Activated CD4-positive, alpha-beta T cell treated with anti-CD3 and anti-CD28 coated beads for 36 hours (primary cell): ENCODE measurements at regions of chr13 and their contacts with region 1.

Region 1: DNA sequence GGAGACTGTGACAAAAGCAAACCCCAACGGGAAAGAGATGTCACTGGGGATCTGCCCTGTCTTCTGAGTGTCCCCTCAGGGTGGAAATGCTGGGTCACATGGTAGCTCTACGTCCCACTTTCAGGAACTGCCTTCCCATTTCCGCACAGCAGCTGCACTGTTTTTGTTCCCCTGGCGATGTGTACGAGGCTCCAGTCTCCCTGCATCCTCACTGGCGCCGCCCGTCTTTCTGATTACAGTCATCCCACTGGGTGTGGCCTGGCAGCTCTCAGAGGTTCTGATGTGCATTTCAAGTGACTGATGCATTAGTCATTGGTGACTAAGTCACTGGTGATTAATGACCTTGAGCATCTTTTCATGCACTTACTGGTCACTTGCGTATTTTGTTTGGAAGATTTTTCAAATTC is 21.2 kb downstream of the PCID2 start:
- DNase-seq: peak; percentile 85
- ATAC-seq: peak; percentile 94
- H3K4me3 Mint-ChIP-seq: no peak overlapping the region
- H3K27ac Mint-ChIP-seq: peak overlapping the region; percentile 71
- H3K4me1 Mint-ChIP-seq: peaks cover 38% of the 10 kb centered on the region
- H3K27me3 Mint-ChIP-seq: no peaks in the 10 kb centered on the region

Region 2: DNA sequence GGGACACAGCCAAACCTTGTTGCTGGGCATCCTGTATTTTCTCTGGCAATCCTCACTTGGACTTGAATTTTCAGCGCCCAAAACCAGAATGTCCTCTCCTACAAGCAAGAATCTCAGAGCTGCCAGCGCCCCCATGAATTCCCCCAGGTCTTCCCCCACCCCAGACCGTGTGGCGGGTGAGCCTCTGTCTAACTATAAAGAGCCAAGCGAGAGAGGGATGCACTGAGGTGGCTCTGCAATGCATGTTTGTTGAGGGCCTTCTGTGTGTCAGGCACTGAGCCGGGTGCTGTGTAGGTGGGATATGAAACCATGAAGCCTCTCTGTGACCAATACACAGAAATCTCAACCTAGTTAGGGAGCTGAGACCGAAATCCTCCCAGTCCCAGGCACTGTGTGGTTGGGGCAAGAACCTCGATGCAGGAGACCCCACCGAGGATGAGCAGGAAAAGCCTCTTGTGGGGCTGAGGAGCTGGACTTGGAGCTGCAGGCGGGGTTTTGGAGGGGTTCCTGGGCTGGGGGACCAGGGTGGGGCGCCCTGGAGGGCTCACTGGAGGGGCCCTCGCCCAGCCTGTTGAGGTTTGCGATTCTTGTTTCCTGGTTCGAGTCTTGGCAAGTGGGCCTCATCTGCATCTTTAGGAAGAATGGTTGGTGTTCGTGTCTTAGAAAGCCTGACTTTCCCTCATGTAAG is 41.2 kb before region 1 on chr13:
- CTCF ChIA-PET with region 1: no interaction called
- POLR2A ChIA-PET with region 1: no interaction called
- intact Hi-C with region 1: loop called in 1 of 2 experiments (anchors 1 kb)
- DNase-seq: peak; percentile 28
- ATAC-seq: peak; percentile 54
- H3K4me3 Mint-ChIP-seq: no peak overlapping the region
- H3K27ac Mint-ChIP-seq: peak overlapping the region; percentile 58
- H3K4me1 Mint-ChIP-seq: peaks cover 11% of the 10 kb centered on the region
- H3K27me3 Mint-ChIP-seq: no peaks in the 10 kb centered on the region